ENCODE measurements at regions of chr6 and their contacts with region 1.

Region 1: DNA sequence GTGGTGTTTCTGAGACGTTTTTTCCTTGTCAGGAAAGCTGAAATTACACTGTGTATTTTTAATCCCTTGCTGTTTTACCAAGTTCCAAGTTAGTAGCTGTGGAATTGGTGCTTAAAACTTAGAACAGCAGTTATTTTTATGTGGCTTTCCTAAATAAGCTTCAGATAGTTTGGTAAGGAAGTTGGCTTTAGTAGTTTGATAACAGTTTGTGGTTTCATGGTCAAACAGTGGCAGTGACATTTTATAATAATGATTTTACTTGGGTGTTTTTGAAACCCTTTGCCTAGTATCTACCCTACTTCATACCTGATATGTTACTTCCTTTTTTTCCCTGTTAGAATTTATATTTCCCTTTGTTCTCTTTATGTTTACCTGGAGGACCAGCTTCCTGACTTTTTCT is 164.9 kb downstream of the JARID2 start:
- DNase-seq: no peak
- H3K4me3 Mint-ChIP-seq: peak overlapping the region; percentile 69
- H3K27ac Mint-ChIP-seq: peak overlapping the region; percentile 79
- H3K4me1 Mint-ChIP-seq: peaks cover 80% of the 10 kb centered on the region
- H3K27me3 Mint-ChIP-seq: no peaks in the 10 kb centered on the region

Region 2: DNA sequence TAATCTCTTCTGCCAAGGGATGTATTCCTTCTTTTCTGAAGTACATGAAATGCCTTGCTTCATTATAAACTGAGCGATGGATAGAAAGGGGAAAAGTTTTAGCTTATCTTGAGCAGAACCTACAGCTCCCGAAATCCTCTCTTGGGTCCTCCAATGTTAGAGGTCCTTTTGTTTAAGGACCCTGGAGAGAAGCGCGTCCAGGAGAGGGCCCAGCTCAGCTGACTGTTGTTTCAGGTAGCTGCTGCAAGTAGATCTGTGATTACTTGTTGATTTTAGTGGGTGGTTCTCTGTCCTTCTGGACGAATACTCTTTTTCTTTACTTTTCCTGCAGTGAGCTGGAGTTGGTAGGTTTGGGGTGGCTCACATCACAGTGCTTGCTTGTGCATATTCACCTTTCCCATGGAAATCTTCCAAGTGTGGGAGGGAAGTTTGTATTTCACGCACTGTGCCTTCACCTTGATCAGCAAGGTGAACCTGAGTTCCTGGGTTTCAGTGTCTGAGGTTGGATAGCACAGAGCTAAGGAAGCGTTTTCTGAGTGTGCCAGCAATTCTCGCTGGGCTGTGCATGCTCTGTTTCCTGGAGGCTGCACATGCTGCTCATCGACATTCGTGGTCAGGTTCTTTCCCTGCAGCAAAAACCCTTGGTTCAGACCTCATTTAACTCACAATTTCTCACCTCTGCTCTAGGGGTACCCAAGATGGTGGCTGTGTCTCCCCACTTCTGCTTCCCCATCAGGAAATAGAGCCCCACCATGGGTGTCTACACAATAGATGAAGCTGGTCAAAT is 11.4 kb after region 1 on chr6:
- intact Hi-C with region 1: loop called (anchors 1 kb)
- DNase-seq: peak; percentile 50
- H3K4me3 Mint-ChIP-seq: peak overlapping the region; percentile 59
- H3K27ac Mint-ChIP-seq: peak overlapping the region; percentile 83
- H3K4me1 Mint-ChIP-seq: peaks cover 80% of the 10 kb centered on the region
- H3K27me3 Mint-ChIP-seq: no peaks in the 10 kb centered on the region

Region 3: DNA sequence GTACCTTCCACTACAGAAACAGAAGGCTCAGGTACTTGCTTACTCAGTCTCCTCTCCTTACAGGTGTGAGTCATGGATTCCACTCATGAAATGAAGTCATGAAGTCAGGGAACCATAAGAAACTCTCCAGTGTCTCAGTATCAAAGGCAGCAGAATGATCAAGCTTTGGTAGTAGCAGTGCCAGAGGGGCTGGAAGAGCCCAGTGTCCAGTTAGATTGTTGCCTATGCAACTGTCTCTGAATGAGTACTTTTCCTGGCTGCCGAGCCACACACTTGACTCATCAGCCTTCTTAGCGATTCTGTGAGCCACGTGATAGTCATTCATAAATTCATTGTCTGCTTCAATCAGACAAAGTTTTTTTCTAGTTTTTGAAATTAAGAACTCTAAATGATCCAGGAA is 304.3 kb after region 1 on chr6:
- intact Hi-C with region 1: no loop called
- DNase-seq: no peak
- H3K4me3 Mint-ChIP-seq: no peak overlapping the region
- H3K27ac Mint-ChIP-seq: peak overlapping the region; percentile 45
- H3K4me1 Mint-ChIP-seq: peaks cover 11% of the 10 kb centered on the region
- H3K27me3 Mint-ChIP-seq: no peaks in the 10 kb centered on the region

Region 4: GRCh38 chr6:17226786-17227233 is 1816.1 kb after region 1 on chr6:
- intact Hi-C with region 1: no loop called
- DNase-seq: no peak
- H3K4me3 Mint-ChIP-seq: no peak overlapping the region
- H3K27ac Mint-ChIP-seq: no peak overlapping the region
- H3K4me1 Mint-ChIP-seq: no peaks in the 10 kb centered on the region
- H3K27me3 Mint-ChIP-seq: no peaks in the 10 kb centered on the region